ENCODE measurements at regions of chr5 and their contacts with region 1.

Region 1: GRCh38 chr5:95403996-95404395 is 12.8 kb downstream of the FAM81B start:
- DNase-seq: no peak
- H3K4me3 ChIP-seq: no peak overlapping the region
- H3K27ac ChIP-seq: no peak overlapping the region
- H3K4me1 ChIP-seq: no peaks in the 10 kb centered on the region
- H3K27me3 ChIP-seq: no peaks in the 10 kb centered on the region
- CTCF ChIP-seq: no peak
- EP300 ChIP-seq: no peak
- POLR2A ChIP-seq: no peak

Region 2: DNA sequence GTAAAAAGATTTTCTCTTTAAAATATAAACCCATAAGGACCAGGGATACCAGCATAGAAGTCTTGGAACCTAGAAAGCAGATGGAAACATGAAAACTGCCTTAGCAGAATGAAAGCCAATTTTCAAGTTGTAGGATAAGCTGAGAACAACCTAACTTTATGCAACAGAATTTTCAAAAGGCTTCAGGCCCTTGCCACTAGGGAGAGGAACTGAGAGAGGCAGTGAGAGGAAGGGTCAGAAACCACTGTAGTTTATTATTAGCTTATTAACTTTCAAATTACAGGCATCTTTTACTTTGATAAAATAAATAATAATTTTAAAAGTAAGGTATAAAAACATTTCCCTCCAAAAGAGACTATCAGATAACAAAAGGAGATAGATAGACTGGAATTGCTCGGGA is 20.5 kb after region 1 on chr5:
- intact Hi-C with region 1: loop called in 1 of 4 experiments (anchors 2 kb)
- DNase-seq: no peak
- H3K4me3 ChIP-seq: no peak overlapping the region
- H3K27ac ChIP-seq: no peak overlapping the region
- H3K4me1 ChIP-seq: no peaks in the 10 kb centered on the region
- H3K27me3 ChIP-seq: no peaks in the 10 kb centered on the region
- CTCF ChIP-seq: no peak
- EP300 ChIP-seq: no peak
- POLR2A ChIP-seq: no peak

Measured in ovary (tissue), 10 donors.